Vagina (tissue), 2 donors: ENCODE measurements at regions of chr15 and their contacts with region 1.

Region 1: GRCh38 chr15:96524676-96525417 is 194.3 kb downstream of the NR2F2 start:
- DNase-seq: no peak
- H3K4me3 ChIP-seq: no peak overlapping the region
- H3K27ac ChIP-seq: no peak overlapping the region
- H3K4me1 ChIP-seq: no peaks in the 10 kb centered on the region
- H3K27me3 ChIP-seq: no peaks in the 10 kb centered on the region
- CTCF ChIP-seq: no peak
- POLR2A ChIP-seq: no peak

Region 2: DNA sequence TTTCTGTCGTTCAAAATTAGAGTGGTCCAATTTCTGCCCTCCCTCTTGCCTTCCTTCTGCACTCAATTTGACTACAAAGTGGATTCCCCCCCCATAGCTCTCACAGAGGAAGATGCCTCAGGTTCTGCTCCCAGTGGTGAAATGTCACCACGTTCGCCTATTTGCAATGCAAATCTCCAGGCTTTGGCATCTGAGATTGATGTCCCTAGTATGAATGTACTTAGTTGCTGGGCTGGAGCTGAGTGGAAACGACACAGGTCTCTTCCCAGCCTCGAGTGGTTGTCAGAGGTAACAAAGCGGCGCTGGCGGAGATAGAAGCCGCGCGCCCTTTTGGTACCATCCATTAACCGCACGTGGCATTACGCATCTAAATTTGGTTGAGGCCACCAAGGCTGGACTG is 1433.4 kb before region 1 on chr15:
- intact Hi-C with region 1: loop called (anchors 10 kb)
- DNase-seq: no peak
- H3K4me3 ChIP-seq: no peak overlapping the region
- H3K27ac ChIP-seq: no peak overlapping the region
- H3K4me1 ChIP-seq: no peaks in the 10 kb centered on the region
- H3K27me3 ChIP-seq: no peaks in the 10 kb centered on the region
- CTCF ChIP-seq: no peak
- POLR2A ChIP-seq: no peak

Region 3: GRCh38 chr15:96693990-96694517 is 169.2 kb after region 1 on chr15:
- intact Hi-C with region 1: no loop called
- DNase-seq: no peak
- H3K4me3 ChIP-seq: no peak overlapping the region
- H3K27ac ChIP-seq: no peak overlapping the region
- H3K4me1 ChIP-seq: peaks cover 16% of the 10 kb centered on the region
- H3K27me3 ChIP-seq: no peaks in the 10 kb centered on the region
- CTCF ChIP-seq: no peak
- POLR2A ChIP-seq: no peak